ENCODE measurements at regions of chr10 and their contacts with region 1.

Region 1: GRCh38 chr10:101042667-101043355 is 11.8 kb downstream of the SFXN3 start:
- DNase-seq: peak; percentile 59 to 86 (median 64)
- ATAC-seq: peak; percentile 77 to 83
- H3K4me3 Mint-ChIP-seq: peak overlapping the region; percentile 91 to 99 (median 98)
- H3K27ac Mint-ChIP-seq: peak overlapping the region; percentile 80 to 98 (median 96)
- H3K4me1 Mint-ChIP-seq: peaks cover 17 to 28% (median 25%) of the 10 kb centered on the region in 4 donors
- H3K27me3 Mint-ChIP-seq: peaks cover 6 to 21% (median 16%) of the 10 kb centered on the region in 5 donors

Region 2: GRCh38 chr10:101031128-101031795 is 11.5 kb before region 1 on chr10 and contains the starts of genes PDZD7 and SFXN3:
- POLR2A ChIA-PET with region 1: interaction called, 14 read pairs
- DNase-seq: peak; percentile 89 to 98 (median 96)
- ATAC-seq: peak; percentile 80 to 83
- H3K4me3 Mint-ChIP-seq: peak within 1 kb of the TSS; percentile 86 to 99 (median 93)
- H3K27ac Mint-ChIP-seq: peak within 1 kb of the TSS; percentile 81 to 99 (median 97)
- H3K4me1 Mint-ChIP-seq: peaks cover 15 to 26% (median 19%) of the 10 kb centered on the region in 4 donors
- H3K27me3 Mint-ChIP-seq: peaks cover 0 to 3% (median 0%) of the 10 kb centered on the region in 5 donors
- polyA plus RNA-seq, gene PDZD7: 0.39 to 1.1 (median 0.89) TPM
- polyA plus RNA-seq, gene SFXN3: 9.9 to 11.5 (median 11.2) TPM

Region 3: DNA sequence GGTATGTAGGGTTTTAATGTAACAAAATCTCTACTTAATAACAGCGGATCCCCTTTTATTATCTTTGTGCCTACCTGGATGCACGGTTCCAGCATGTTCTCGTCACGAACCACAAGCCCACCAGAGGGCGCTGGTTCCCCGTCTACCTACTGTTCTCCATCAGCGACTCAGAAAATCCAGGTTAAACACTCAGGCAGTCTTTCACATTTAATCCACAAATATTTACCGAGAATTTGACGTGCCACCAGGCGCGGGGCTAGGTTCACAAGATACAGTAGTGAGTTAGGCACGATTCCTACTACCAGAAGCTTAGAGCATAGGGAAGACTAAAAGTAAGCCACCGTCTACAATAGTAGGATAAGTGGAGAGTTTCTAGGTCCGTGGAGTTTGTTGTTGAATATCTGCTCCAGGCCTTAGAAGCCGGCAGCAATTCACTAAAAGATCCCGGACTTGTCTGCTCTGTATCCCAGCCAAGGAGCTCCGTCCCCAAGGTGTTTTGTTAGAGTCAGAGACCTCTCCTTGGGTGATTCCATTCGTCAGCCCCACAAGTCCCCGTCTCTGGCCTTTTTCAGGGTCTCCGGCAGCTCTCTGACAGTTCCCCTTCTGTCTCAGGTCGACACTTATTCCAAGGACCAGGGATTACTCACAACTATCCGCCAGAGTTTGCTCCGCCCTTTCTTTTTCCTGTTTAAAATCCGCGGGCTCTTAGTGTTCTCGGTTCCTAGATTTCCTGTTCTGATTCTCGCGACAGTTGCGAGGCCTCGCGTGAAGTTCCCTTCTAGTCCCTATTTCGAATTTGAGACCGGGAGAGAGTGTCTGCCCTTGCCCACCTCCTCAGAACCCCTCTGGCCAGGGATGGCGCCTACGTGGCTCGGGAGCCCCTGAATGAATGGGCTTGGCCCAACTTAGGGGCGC is 17.5 kb after region 1 on chr10:
- POLR2A ChIA-PET with region 1: interaction called, 38 read pairs
- DNase-seq: peak; percentile 79 to 99 (median 90)
- ATAC-seq: peak; percentile 75 to 77
- H3K4me3 Mint-ChIP-seq: peak overlapping the region; percentile 92 to 99 (median 96)
- H3K27ac Mint-ChIP-seq: peak overlapping the region; percentile 83 to 99 (median 94)
- H3K4me1 Mint-ChIP-seq: peaks cover 13 to 39% (median 32%) of the 10 kb centered on the region in 4 donors
- H3K27me3 Mint-ChIP-seq: peaks cover 11 to 24% (median 17%) of the 10 kb centered on the region in 5 donors